ENCODE measurements at regions of chr2 and their contacts with region 1.

Region 1: DNA sequence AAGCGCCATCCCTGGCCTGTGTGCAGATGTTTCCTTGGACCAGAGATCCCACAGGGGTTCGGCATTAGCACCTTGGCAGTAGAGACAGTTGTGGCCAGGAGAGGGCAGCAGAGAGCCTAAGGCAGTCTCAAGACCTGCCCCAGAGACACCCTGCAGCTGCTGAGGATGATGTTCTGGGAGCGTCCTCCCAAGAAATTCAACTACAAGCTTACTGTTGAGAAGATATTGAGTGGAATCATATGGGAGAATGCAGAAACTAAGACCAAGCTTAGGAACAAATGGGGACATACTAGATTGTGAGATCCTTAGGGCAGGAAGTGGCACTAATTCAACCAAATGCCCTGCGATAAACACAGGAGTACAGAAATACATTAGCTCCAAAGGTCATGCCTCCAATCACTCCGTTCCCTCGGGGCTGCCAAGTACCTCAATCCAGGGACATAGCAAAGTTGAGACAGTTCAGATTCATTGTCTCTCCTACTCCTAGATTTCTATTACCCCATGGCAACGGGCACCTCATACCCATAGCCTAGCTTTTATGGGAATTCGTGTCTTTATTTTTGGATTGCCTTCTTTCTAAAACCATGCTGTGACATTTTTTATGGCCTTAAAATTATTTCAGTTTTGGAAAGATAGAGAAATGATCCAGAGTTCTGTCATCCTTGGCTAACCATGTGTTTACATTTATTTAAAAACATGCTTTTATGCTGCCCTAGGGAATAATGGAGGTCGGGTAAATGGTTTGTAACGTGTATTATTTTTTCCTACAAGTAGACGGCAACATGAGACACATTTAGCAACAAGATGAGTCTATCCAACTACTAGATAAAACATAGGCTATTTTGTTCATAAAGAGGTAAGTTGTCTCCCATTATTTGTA is 2.2 kb upstream of the ERMN start:
- DNase-seq: peak; percentile 87 to 93
- ATAC-seq: peak; percentile 85
- H3K4me3 ChIP-seq: no peak overlapping the region
- H3K27ac ChIP-seq: no peak overlapping the region
- H3K4me1 ChIP-seq: peaks cover 0 to 2% of the 10 kb centered on the region in 2 donors
- H3K27me3 ChIP-seq: no peaks in the 10 kb centered on the region

Region 2: DNA sequence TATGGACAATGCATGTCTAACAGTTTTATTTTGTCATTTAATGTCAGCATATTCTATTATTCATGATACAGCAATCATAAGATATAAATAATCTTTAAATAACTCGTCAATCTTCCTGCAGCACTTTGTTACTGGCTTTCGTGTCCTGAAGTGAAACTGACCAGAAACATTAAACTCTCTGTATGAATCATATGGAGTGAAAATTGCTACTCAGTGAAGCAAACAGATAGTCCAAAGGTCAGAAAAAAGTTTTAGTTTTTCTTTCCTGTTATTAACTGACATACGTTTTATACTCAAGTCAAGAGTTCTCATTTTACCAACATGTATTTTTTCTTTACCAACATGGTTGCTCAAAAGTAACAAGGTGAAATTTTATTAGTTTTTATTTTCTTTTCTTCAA is 177.1 kb before region 1 on chr2:
- intact Hi-C with region 1: no loop called
- DNase-seq: no peak
- ATAC-seq: no peak
- H3K4me3 ChIP-seq: no peak overlapping the region
- H3K27ac ChIP-seq: no peak overlapping the region
- H3K4me1 ChIP-seq: no peaks in the 10 kb centered on the region
- H3K27me3 ChIP-seq: no peaks in the 10 kb centered on the region

Region 3: GRCh38 chr2:157173740-157174184 is 154.1 kb before region 1 on chr2:
- intact Hi-C with region 1: no loop called
- DNase-seq: no peak
- ATAC-seq: peak; percentile 32
- H3K4me3 ChIP-seq: peak overlapping the region in 1 of 2 donors; percentile 34
- H3K27ac ChIP-seq: no peak overlapping the region
- H3K4me1 ChIP-seq: peaks cover 0 to under 1% of the 10 kb centered on the region in 2 donors
- H3K27me3 ChIP-seq: no peaks in the 10 kb centered on the region

Region 4: GRCh38 chr2:157492189-157492773 is 164.4 kb after region 1 on chr2:
- intact Hi-C with region 1: loop called in 1 of 2 experiments (anchors 10 kb)
- DNase-seq: peak in 1 of 2 donors; percentile 73
- ATAC-seq: no peak
- H3K4me3 ChIP-seq: no peak overlapping the region
- H3K27ac ChIP-seq: no peak overlapping the region
- H3K4me1 ChIP-seq: no peaks in the 10 kb centered on the region
- H3K27me3 ChIP-seq: no peaks in the 10 kb centered on the region

Region 5: GRCh38 chr2:157957596-157957995 is 629.7 kb after region 1 on chr2:
- intact Hi-C with region 1: no loop called
- DNase-seq: no peak
- ATAC-seq: no peak
- H3K4me3 ChIP-seq: no peak overlapping the region
- H3K27ac ChIP-seq: no peak overlapping the region
- H3K4me1 ChIP-seq: no peaks in the 10 kb centered on the region
- H3K27me3 ChIP-seq: no peaks in the 10 kb centered on the region

Measured in aorta (tissue), 5 donors.